ENCODE measurements at regions of chrX and their contacts with region 1.

Region 1: DNA sequence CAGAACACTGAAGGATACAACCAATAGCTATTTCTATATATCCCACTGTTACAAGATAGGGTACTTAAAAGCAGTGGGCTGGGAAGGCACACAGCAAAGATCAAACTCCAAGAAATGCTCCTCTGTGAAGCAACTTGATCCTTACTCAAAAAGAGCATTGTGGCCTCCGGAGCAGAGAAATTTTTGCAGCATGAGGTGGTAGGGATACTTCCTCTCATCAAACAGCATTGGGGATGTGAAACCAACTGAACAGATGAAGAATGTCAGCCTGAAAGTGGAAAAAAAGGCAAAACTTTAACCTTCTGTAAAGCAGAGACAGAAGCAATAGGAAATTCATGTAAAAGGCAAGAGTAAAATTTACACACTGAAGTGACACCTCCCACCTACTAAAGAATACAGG is 92.2 kb downstream of the HUWE1 start:
- DNase-seq: peak; percentile 16
- ATAC-seq: no peak
- H3K4me3 ChIP-seq: no peak overlapping the region
- H3K27ac ChIP-seq: no peak overlapping the region
- H3K4me1 ChIP-seq: no peaks in the 10 kb centered on the region
- H3K27me3 ChIP-seq: no peaks in the 10 kb centered on the region
- CTCF ChIP-seq: no peak
- EP300 ChIP-seq: no peak
- POLR2A ChIP-seq: no peak
- RAD21 ChIP-seq: no peak

Region 2: GRCh38 chrX:53631156-53631555 is 36.8 kb after region 1 on chrX:
- CTCF ChIA-PET with region 1: no interaction called
- POLR2A ChIA-PET with region 1: no interaction called
- in situ Hi-C with region 1: loop called (anchors 5 kb)
- intact Hi-C with region 1: no loop called
- DNase-seq: no peak
- ATAC-seq: no peak
- H3K4me3 ChIP-seq: no peak overlapping the region
- H3K27ac ChIP-seq: no peak overlapping the region
- H3K4me1 ChIP-seq: no peaks in the 10 kb centered on the region
- H3K27me3 ChIP-seq: no peaks in the 10 kb centered on the region
- CTCF ChIP-seq: no peak
- EP300 ChIP-seq: no peak
- POLR2A ChIP-seq: no peak
- RAD21 ChIP-seq: no peak